AG04450 (cell line): ENCODE measurements at regions of chr14 and their contacts with region 1.

Region 1: DNA sequence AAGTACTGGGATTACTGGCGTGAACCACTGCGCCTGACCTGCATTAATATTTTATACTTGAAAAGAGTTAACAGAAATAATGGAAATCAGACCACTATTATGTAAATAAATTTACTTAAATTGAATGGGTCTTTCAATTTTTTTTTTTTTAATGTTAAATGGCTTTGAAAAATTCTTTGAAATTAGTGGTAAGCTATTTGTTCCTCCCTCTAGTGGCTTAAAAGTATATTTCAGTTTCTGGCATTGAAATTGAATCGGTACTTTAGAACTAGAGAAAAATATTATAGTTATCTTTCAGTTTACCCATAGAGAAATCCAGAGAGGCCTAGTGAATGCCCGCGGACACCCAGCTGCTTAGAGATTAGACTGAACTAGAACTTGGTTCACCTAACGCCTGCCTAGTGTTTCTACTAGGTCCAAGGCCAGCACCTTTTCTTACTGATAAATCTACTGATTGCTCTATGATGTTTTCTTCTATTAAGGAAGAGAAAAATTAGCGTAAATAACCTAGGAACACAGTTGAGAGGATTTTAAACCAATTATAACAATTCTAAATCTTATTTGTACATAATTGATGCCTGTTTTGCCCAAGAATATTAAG is 106.5 kb downstream of the EML1 start:
- DNase-seq: no peak
- H3K4me3 ChIP-seq: no peak overlapping the region
- H3K27ac ChIP-seq: no peak overlapping the region
- H3K27me3 ChIP-seq: no peaks in the 10 kb centered on the region
- CTCF ChIP-seq: peak; percentile 59

Region 2: DNA sequence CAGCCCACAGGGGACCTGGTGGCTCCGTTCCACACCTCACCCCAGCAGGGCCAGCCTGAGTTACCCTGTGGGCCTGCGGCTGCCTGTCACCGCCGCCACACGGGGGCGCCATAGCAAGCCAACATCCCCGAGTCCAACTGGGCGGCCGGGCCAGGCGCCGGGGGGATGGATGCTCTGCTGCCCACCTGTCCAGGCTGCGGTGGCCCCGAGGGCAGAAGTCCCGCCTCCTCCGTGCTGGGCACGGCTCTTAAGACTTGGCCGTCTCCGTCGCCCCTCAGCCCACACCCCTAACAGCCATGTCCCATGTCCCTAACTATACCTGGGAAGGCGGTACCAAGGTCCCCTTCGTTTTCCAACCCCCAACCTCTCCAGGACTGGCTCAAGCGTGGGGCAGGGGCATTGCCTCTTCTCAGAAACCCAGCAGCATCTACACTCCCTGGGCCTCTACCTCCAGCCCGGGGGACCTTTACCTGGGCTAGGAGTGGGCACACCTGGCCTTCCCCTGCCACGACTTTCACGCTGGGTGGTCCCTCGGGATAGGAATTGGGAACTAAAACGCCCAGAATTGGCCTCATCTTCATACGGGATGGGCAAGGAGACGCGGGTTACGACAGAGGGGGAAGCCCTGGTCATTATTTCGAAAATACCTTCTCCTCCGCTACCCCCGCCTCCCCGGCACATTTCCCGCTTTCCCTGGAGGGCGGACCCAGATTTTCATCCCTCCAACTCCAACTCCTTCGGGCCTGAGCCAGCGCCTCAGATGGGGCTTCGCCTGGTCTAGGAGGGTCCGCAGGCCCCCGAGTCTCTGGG is 216.7 kb before region 1 on chr14:
- CTCF ChIA-PET with region 1: interaction called, 10 read pairs
- POLR2A ChIA-PET with region 1: interaction called, 3 read pairs
- DNase-seq: peak; percentile 21
- H3K4me3 ChIP-seq: peak overlapping the region; percentile 81
- H3K27ac ChIP-seq: peak overlapping the region; percentile 70
- H3K27me3 ChIP-seq: peaks cover 22% of the 10 kb centered on the region
- CTCF ChIP-seq: peak; percentile 84

Region 3: DNA sequence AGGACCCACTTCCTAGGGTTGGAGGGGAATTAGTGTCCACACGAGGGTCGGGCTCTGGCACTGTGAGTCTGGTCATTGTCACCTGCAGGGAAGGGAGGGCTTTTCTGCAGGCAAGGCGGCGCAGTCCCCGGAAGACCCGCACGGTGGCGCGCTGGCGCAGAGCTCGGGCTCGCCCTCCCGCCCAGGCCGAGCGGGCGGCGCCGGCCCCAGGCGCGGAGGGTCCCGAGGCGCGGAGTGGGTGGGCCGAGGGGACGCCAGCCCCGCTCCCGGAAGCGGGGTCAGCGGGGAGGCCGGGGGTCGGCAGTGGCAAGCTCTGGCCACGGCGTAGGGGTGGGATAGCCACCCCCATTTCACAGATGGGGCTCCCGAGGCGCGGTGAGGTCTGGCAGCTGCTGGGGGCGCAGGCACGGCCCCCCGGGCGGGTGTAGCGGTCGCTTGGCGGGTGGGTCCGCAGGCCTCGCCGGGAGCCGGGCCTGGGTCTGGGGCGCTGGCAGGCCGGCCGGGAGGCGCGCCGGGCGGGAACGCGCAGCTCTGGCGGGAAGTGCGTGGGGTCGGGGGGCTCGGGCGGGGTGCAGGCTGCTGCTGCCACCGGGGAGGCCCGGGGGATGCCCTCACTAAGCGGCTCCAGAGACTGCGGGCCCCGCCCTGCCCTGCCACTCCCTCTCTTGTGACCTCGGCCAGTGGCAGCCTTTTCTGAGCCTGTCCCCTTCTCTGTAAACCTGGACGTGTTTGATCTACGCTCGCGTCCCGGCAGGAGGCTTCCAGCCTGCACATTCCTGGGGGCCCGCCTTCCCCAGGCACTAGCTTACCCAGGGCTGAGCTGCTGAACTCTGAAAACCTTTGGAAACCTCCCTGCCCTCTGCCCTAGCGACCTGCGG is 169.4 kb before region 1 on chr14:
- CTCF ChIA-PET with region 1: interaction called, 20 read pairs
- POLR2A ChIA-PET with region 1: no interaction called
- DNase-seq: no peak
- H3K4me3 ChIP-seq: peak overlapping the region; percentile 60
- H3K27ac ChIP-seq: no peak overlapping the region
- H3K27me3 ChIP-seq: peaks cover 6% of the 10 kb centered on the region
- CTCF ChIP-seq: peak; percentile 75

Region 4: DNA sequence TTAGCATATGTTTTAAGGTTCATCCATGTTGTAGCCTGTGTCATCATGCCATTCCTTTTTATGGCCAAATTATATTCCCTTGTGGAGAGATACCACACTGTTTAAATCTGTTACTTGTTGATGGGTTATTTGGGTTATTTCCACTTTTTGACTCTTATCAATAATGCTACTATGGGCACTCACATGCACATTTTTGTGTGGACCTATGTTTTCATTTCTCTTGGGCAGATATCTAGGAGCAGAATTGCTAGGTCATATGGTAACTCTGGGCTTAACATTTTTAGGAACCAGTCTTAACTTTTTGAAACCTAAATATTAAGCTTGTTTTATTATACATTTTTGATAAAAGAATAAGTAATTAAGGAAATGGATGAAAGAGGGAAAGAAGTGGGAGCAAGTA is 102.4 kb before region 1 on chr14:
- CTCF ChIA-PET with region 1: interaction called, 10 read pairs
- POLR2A ChIA-PET with region 1: no interaction called
- DNase-seq: no peak
- H3K4me3 ChIP-seq: no peak overlapping the region
- H3K27ac ChIP-seq: no peak overlapping the region
- H3K27me3 ChIP-seq: no peaks in the 10 kb centered on the region
- CTCF ChIP-seq: no peak

Region 5: DNA sequence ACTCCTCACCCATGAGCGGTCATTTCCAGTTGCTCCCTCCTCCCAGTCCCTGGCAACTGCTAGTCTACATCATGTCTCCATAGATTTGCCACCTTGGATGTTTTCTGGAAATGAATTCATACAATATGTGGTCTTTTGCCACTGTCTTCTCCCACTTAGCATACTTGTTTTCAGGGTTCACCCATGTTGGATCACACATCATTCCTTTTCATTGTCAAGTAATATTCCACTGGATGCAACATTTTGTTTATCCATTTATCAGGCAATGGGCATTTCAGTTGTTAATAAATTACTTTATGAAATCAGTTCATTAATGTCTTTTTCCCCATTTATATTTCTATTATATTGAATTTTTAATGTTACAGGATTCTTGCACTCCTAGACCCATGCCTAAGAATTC is 42.1 kb before region 1 on chr14:
- CTCF ChIA-PET with region 1: no interaction called
- POLR2A ChIA-PET with region 1: no interaction called
- DNase-seq: no peak
- H3K4me3 ChIP-seq: no peak overlapping the region
- H3K27ac ChIP-seq: no peak overlapping the region
- H3K27me3 ChIP-seq: no peaks in the 10 kb centered on the region
- CTCF ChIP-seq: no peak

Region 6: DNA sequence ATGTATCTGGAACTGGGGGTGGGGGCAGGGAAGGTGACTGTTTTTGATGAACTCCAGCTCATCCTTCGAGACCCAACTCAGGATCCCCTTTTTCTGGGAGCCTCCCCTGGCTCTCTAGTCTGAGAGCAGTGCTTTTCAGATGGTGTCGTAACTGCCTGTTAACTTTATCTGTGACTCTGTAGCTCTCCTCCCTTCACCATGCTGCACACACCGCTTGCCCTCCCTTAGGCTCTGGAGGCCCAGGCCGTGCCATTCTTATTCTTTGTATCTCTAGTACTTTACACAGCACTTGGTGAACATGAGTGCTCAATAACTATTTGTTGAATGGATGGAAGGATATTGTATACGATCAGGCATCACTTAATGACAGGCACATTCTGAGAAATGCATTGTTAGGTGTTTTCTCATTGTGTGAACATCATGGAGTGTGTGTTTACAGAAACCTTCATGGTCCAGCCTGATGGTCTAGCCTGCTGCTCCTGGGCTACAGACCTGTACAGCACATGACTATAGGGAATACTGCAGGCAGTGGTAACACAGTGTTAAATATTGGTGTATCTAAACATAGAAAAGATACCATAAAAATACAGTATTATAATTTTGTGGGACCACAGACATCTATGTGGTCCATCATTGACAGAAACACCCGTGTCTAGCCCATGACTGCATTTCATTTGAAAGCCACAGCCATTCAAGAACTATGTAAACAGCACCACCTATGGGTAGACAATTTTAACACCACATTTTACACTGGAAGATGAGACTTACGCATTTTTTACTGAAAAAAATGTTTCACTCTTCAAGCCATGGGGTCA is 14.6 kb before region 1 on chr14:
- CTCF ChIA-PET with region 1: interaction called, 27 read pairs
- POLR2A ChIA-PET with region 1: no interaction called
- DNase-seq: peak; percentile 34
- H3K4me3 ChIP-seq: no peak overlapping the region
- H3K27ac ChIP-seq: no peak overlapping the region
- H3K27me3 ChIP-seq: no peaks in the 10 kb centered on the region
- CTCF ChIP-seq: peak; percentile 78

Region 7: GRCh38 chr14:99910337-99911309 is 10.9 kb after region 1 on chr14:
- CTCF ChIA-PET with region 1: interaction called, 37 read pairs
- POLR2A ChIA-PET with region 1: no interaction called
- DNase-seq: peak; percentile 69
- H3K4me3 ChIP-seq: no peak overlapping the region
- H3K27ac ChIP-seq: peak overlapping the region; percentile 77
- H3K27me3 ChIP-seq: no peaks in the 10 kb centered on the region
- CTCF ChIP-seq: no peak

Region 8: DNA sequence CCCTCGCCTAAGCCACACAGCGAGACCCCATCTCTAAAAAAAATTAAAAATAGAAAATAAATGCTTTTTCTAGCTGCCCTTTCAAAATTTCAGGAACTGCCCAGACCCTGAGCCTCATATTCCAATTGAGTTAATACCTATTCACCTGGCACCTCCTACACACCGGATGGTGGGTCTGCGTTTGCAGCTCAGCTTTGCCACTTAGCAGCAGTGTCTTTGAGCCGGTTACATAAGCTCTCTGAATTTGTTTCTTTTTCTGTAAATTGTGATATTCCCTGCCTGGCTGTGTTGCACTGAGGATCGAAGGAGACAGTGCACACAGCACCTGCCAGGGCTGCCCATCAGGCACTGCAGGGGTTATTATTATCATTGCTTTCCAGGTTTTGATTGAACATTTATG is 19.1 kb after region 1 on chr14:
- CTCF ChIA-PET with region 1: interaction called, 12 read pairs
- POLR2A ChIA-PET with region 1: interaction called, 3 read pairs
- DNase-seq: no peak
- H3K4me3 ChIP-seq: no peak overlapping the region
- H3K27ac ChIP-seq: no peak overlapping the region
- H3K27me3 ChIP-seq: no peaks in the 10 kb centered on the region
- CTCF ChIP-seq: no peak

Region 9: GRCh38 chr14:99946652-99947489 is 47.2 kb after region 1 on chr14:
- CTCF ChIA-PET with region 1: no interaction called
- POLR2A ChIA-PET with region 1: no interaction called
- DNase-seq: no peak
- H3K4me3 ChIP-seq: no peak overlapping the region
- H3K27ac ChIP-seq: no peak overlapping the region
- H3K27me3 ChIP-seq: peaks cover 7% of the 10 kb centered on the region
- CTCF ChIP-seq: peak; percentile 91

Region 10: GRCh38 chr14:99995700-99996356 is 96.2 kb after region 1 on chr14:
- CTCF ChIA-PET with region 1: no interaction called
- POLR2A ChIA-PET with region 1: no interaction called
- DNase-seq: no peak
- H3K4me3 ChIP-seq: no peak overlapping the region
- H3K27ac ChIP-seq: no peak overlapping the region
- H3K27me3 ChIP-seq: no peaks in the 10 kb centered on the region
- CTCF ChIP-seq: peak; percentile 71